ENCODE measurements at regions of chr11 and their contacts with region 1.

Region 1: GRCh38 chr11:65662799-65663638 is at the start of gene RELA:
- DNase-seq: peak; percentile 95
- ATAC-seq: peak; percentile 86
- H3K4me3 Mint-ChIP-seq: peak within 1 kb of the TSS; percentile 93
- H3K27ac Mint-ChIP-seq: peak within 1 kb of the TSS; percentile 94
- H3K4me1 Mint-ChIP-seq: peaks cover 24% of the 10 kb centered on the region
- H3K27me3 Mint-ChIP-seq: no peaks in the 10 kb centered on the region
- total RNA-seq, gene RELA: 112 to 117 TPM

Region 2: GRCh38 chr11:65532388-65533064 is 130.5 kb before region 1 on chr11:
- POLR2A ChIA-PET with region 1: no interaction called
- DNase-seq: no peak
- ATAC-seq: no peak
- H3K4me3 Mint-ChIP-seq: no peak overlapping the region
- H3K27ac Mint-ChIP-seq: no peak overlapping the region
- H3K4me1 Mint-ChIP-seq: peaks cover 16% of the 10 kb centered on the region
- H3K27me3 Mint-ChIP-seq: no peaks in the 10 kb centered on the region

Region 3: GRCh38 chr11:65637794-65638317 is 25.2 kb before region 1 on chr11 and contains the start of gene SIPA1:
- POLR2A ChIA-PET with region 1: interaction called, 33 read pairs
- DNase-seq: peak; percentile 94
- ATAC-seq: peak; percentile 34
- H3K4me3 Mint-ChIP-seq: peak within 1 kb of the TSS; percentile 92
- H3K27ac Mint-ChIP-seq: peak within 1 kb of the TSS; percentile 93
- H3K4me1 Mint-ChIP-seq: peaks cover 37% of the 10 kb centered on the region
- H3K27me3 Mint-ChIP-seq: no peaks in the 10 kb centered on the region
- total RNA-seq, gene SIPA1: 245 to 266 TPM

Region 4: DNA sequence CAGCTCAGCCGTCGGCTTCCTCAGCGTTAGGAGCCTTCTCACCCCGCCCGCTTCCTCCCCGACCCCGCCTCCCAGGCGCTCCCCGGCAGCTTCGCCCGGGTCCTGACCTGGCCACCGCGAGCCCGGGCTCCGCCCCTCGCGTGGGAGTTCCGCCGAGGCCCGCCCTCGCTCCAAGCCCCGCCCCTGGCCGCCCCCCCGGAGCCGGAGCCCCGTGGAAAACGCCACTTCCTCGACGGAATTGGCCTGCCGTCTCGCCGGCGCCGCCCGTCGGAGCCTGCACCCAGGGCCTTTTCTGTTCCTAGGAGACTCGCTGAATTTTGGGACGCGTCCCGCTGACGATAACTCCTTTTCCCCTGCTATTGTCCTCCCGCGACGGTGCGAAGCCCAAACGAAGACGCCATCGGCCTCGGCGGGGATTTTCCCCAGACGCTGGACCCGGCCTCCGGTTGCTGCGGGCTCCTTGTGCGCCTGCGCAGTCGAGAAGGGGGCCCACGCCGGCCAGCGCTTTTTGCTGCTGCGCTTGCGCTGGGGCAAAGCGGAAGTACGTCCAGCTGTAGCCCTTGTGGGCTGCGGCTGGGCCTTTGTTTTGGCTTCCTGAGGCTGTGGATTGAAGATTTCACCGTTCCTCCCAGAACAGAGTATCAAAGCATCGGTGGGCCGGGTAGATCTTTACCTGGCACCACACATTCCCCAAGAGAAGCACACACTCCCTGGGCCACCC is 10.3 kb before region 1 on chr11:
- POLR2A ChIA-PET with region 1: interaction called, 57 read pairs
- DNase-seq: peak; percentile 99
- ATAC-seq: peak; percentile 88
- H3K4me3 Mint-ChIP-seq: peak overlapping the region; percentile 90
- H3K27ac Mint-ChIP-seq: peak overlapping the region; percentile 92
- H3K4me1 Mint-ChIP-seq: peaks cover 36% of the 10 kb centered on the region
- H3K27me3 Mint-ChIP-seq: no peaks in the 10 kb centered on the region

Region 5: DNA sequence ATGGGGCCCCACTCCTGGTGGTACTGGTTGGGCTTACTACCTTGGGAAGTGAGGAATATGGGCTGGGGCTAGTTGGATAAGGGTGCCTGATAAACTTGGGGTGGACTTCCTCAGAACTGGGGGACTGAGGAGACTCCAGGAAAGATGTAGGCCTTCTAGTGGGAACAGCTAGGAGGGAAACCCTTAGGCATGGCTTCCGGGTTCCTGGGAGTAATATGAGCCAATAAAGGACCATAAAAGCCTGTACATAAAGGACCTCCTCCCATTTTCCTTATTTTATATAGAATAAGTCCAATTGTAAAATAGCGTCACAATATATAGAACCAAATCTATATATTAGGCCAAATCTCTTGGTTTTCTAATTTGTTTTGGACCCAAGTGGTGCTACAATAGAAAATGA is 76.0 kb after region 1 on chr11:
- POLR2A ChIA-PET with region 1: no interaction called
- DNase-seq: no peak
- ATAC-seq: no peak
- H3K4me3 Mint-ChIP-seq: no peak overlapping the region
- H3K27ac Mint-ChIP-seq: no peak overlapping the region
- H3K4me1 Mint-ChIP-seq: no peaks in the 10 kb centered on the region
- H3K27me3 Mint-ChIP-seq: peaks cover 32% of the 10 kb centered on the region

Measured in activated naive CD8-positive, alpha-beta T cell treated with anti-CD3 and anti-CD28 coated beads, Interleukin-2, amount 10 ng/mL, durations not matched to agents 7 days and 5 days (primary cell).